Mucosa of descending colon (tissue), 3 donors: ENCODE measurements at regions of chr3 and their contacts with region 1.

Region 1: DNA sequence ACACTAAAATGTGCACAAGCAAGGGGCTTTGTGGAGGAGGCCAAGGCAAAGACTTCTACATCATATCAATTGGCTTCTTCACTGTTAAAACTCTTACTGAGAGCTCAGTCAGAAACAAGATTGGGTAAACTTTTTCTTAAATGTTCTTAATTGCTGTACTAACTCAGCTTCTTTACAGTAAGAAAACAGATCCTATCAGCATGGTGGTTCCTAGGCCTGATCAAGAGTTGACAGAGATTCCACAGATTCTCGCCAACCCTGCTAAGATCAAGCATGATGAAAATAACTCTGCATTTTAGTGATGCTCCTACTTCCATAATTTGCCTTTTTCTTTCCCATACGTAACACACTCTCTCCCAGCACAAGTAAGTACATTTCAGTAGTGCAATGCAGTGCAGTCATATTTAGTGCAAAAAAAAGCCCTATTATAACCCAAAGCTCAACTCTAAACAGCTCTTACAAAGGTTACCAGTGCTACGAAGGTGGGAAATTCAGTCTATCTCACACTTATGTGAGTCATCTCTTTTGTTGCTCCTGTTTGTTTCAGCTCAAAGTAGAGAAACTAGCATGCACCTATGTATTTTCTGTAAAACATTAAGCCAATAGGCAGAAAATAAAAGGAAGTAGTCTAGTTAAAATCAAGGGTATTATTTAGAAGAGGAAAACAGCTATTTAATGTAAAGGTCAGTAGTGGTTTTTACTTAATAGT is 29.9 kb downstream of the TIGIT start:
- DNase-seq: no peak
- ATAC-seq: peak; percentile 77
- H3K4me3 ChIP-seq: no peak overlapping the region
- H3K4me1 ChIP-seq: no peaks in the 10 kb centered on the region
- CTCF ChIP-seq: no peak

Region 2: DNA sequence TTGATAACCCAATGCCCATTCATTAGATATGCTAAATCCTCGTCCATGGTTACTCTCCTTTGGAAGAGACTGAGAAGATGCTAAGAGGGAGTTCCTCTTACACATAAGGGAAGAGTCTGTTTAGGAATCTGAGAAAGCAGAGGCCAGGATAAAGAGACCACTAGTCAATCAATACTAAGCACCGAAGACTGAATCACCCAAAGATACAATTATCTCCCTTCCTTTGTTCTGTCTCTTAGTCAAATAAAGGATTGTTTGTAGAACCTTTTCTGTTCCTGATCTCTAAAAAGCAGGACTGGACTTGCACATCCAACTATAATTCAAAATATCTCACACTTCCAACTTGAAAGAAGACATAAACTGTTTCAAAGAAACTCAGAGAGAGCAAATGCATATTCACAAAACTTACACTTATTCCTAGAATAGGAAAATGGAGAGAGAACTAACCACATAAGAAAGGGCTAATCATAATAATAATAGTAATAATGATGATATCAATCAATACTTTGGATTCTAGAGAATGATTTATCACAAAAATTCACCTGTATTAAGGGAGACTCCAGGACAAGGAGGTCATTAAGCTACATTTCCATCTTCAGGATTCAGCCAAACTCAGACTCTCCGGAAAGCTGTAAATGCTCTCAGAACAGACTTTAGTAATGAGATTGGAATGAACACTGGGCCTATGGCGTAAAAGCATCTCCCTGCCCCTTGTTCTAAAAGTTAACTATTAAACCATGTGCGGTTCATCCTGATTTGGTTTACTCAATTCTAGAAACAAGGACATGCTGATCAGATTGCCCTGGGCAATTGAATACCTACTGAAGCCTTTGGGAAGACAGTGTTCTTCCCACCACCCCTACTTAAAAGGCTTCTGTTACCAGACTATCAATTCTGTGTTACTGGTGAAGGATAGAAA is 421.9 kb after region 1 on chr3:
- intact Hi-C with region 1: loop called in 1 of 2 experiments (anchors 5 kb)
- DNase-seq: peak in 1 of 3 donors; percentile 29
- ATAC-seq: peak; percentile 97
- H3K4me3 ChIP-seq: no peak overlapping the region
- H3K4me1 ChIP-seq: no peaks in the 10 kb centered on the region
- CTCF ChIP-seq: no peak